ENCODE measurements at regions of chr2 and their contacts with region 1.

Region 1: GRCh38 chr2:39227628-39228412 is 15.9 kb downstream of the CDKL4 start:
- DNase-seq: peak; percentile 96
- H3K4me3 ChIP-seq: peak overlapping the region in 5 of 8 donors; percentile 17 to 53 (median 20)
- H3K27ac ChIP-seq: no peak overlapping the region
- H3K4me1 ChIP-seq: peaks cover 0 to 23% (median 13%) of the 10 kb centered on the region in 6 donors
- H3K27me3 ChIP-seq: no peaks in the 10 kb centered on the region
- CTCF ChIP-seq: peak; percentile 60 to 85 (median 74)
- POLR2A ChIP-seq: no peak

Region 2: GRCh38 chr2:39033980-39034379 is 193.8 kb before region 1 on chr2:
- intact Hi-C with region 1: no loop called
- DNase-seq: no peak
- H3K4me3 ChIP-seq: no peak overlapping the region
- H3K27ac ChIP-seq: no peak overlapping the region
- H3K4me1 ChIP-seq: no peaks in the 10 kb centered on the region
- H3K27me3 ChIP-seq: no peaks in the 10 kb centered on the region
- CTCF ChIP-seq: no peak
- POLR2A ChIP-seq: no peak

Region 3: GRCh38 chr2:39061280-39061679 is 166.5 kb before region 1 on chr2:
- intact Hi-C with region 1: loop called (anchors 2 kb)
- DNase-seq: no peak
- H3K4me3 ChIP-seq: no peak overlapping the region
- H3K27ac ChIP-seq: no peak overlapping the region
- H3K4me1 ChIP-seq: peaks cover 0 to 27% (median 3%) of the 10 kb centered on the region in 6 donors
- H3K27me3 ChIP-seq: no peaks in the 10 kb centered on the region
- CTCF ChIP-seq: no peak
- POLR2A ChIP-seq: no peak

Region 4: DNA sequence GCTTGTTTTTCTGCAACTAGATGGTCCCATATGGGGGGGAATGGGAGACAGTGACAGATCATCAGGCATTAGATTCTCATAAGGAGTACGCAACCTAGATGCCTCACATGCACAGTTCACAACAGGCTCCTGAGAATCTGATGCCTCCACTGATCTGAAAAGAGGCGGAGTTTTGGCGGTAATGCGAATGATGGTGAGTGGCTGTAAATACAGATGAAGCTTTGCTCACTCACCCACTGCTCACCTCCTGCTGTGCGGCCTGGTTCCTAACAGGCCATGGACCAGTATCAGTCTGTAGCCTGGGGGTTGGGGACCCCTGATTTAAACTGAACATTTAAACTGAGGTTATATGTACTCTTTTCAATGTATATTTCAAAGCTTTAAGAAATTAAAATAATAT is 147.7 kb before region 1 on chr2:
- intact Hi-C with region 1: no loop called
- DNase-seq: no peak
- H3K4me3 ChIP-seq: no peak overlapping the region
- H3K27ac ChIP-seq: no peak overlapping the region
- H3K4me1 ChIP-seq: peaks cover 0 to 38% (median 7%) of the 10 kb centered on the region in 6 donors
- H3K27me3 ChIP-seq: no peaks in the 10 kb centered on the region
- CTCF ChIP-seq: no peak
- POLR2A ChIP-seq: no peak

Region 5: GRCh38 chr2:39119732-39120520 is 107.9 kb before region 1 on chr2:
- intact Hi-C with region 1: loop called (anchors 5 kb)
- DNase-seq: no peak
- H3K4me3 ChIP-seq: peak overlapping the region; percentile 66 to 91 (median 80)
- H3K27ac ChIP-seq: peak overlapping the region; percentile 94 to 98 (median 97)
- H3K4me1 ChIP-seq: peaks cover 28 to 87% (median 57%) of the 10 kb centered on the region in 6 donors
- H3K27me3 ChIP-seq: no peaks in the 10 kb centered on the region
- CTCF ChIP-seq: peak in 7 of 11 experiments; percentile 9 to 59 (median 43)
- POLR2A ChIP-seq: no peak

Measured in spleen (tissue), 13 donors.